Heart right ventricle (tissue), 16 donors: ENCODE measurements at regions of chr3 and their contacts with region 1.

Region 1: DNA sequence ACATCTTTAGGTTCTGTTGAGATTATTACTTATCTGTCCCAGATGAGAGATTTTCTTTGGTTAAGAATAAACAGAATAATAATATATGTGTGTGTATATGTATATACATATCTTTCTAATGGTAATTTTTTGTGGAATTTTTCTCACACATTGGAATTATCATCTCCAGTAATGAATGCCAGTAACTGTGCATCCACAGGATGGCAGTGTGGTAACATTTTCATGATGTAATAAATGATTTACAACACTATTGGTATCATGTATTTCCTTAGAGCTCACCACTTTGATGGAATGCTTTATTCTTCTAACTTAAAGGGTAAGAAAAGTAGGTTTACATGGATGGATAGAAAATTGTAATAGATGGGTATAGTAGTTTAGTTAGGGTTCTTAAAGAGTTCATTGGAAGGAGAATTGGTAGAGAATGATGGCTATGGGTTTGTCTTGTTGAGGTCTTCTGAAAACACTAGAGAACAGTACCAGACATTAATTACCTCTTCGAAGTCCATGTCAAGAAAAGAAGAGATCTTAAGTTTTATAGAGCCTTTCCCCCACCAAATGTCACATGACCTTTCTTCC is 78.1 kb downstream of the STT3B start:
- DNase-seq: peak in 1 of 2 donors; percentile 26
- ATAC-seq: peak in 1 of 8 donors; percentile 24
- H3K4me3 ChIP-seq: no peak overlapping the region
- H3K27ac ChIP-seq: no peak overlapping the region
- H3K4me1 ChIP-seq: peaks cover 0 to 3% (median 0%) of the 10 kb centered on the region in 9 donors
- H3K27me3 ChIP-seq: no peaks in the 10 kb centered on the region
- CTCF ChIP-seq: peak; percentile 23 to 72 (median 59)

Region 2: DNA sequence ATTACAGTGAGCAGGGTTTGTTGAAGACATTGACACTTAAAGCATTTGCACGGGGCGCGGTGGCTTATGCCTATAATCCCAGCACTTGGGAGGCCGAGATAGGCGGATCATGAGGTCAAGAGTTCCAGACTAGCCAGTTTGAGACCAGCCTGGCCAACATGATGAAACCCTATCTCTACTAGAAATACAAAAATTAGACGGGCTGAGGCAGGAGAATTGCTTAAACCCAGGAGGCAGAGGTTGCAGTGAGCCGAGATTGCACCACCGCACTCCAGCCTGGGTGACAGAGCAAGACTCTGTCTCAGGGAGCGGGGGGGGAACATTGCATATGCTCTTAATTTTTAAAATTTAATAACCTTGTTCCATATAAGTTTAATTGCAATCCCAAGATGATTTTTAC is 66.2 kb before region 1 on chr3:
- intact Hi-C with region 1: loop called in 1 of 10 experiments (anchors 5 kb)
- DNase-seq: peak in 1 of 2 donors; percentile 22
- ATAC-seq: peak in 6 of 8 donors; percentile 25 to 73 (median 52)
- H3K4me3 ChIP-seq: peak overlapping the region in 1 of 10 donors; percentile 1
- H3K27ac ChIP-seq: peak overlapping the region in 3 of 10 donors; percentile 4 to 10 (median 7)
- H3K4me1 ChIP-seq: peaks cover 3 to 89% (median 37%) of the 10 kb centered on the region in 9 donors
- H3K27me3 ChIP-seq: no peaks in the 10 kb centered on the region
- CTCF ChIP-seq: no peak

Region 3: DNA sequence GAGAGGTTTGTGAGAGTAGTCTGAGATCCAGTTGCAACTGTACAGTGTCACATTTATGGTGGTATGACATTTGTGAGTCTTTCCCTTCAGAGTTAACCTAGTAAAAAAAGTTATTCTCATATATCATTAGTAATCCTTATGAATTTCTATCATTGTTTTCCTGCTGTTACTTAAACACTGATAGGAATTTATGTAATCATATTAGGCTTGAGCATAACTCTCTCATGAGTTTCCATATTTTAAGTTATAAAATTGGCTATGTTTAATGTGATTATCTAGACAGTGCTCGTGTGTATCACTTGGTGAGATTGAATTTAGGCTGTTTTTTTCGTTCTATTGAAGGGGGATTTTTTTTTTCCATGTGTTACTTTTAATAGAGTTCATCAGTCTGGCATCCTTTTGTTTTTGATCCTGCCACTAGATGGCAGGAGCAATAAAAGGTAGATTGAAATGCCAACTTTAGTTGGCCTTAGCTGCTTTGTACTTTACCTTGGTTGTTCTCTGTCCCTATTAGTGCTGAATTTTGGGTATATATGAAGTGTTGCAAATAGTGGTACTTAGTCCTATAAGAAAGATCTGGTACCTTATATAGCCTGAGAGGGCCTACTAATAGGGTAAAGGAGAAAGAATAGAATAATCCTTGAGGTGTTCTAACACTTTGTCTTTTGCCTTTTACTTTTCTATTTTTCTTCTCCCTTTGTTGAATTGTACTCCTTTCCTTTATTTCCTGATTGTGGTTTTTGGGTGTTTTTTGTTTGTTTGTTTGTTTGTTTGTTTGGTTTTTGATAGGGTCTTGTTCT is 60.1 kb before region 1 on chr3:
- intact Hi-C with region 1: loop called in 2 of 10 experiments (anchors 5 to 10 kb)
- DNase-seq: no peak
- ATAC-seq: peak in 5 of 8 donors; percentile 43 to 71 (median 59)
- H3K4me3 ChIP-seq: no peak overlapping the region
- H3K27ac ChIP-seq: no peak overlapping the region
- H3K4me1 ChIP-seq: peaks cover 10 to 66% (median 53%) of the 10 kb centered on the region in 9 donors
- H3K27me3 ChIP-seq: no peaks in the 10 kb centered on the region
- CTCF ChIP-seq: peak; percentile 30 to 78 (median 68)

Region 4: DNA sequence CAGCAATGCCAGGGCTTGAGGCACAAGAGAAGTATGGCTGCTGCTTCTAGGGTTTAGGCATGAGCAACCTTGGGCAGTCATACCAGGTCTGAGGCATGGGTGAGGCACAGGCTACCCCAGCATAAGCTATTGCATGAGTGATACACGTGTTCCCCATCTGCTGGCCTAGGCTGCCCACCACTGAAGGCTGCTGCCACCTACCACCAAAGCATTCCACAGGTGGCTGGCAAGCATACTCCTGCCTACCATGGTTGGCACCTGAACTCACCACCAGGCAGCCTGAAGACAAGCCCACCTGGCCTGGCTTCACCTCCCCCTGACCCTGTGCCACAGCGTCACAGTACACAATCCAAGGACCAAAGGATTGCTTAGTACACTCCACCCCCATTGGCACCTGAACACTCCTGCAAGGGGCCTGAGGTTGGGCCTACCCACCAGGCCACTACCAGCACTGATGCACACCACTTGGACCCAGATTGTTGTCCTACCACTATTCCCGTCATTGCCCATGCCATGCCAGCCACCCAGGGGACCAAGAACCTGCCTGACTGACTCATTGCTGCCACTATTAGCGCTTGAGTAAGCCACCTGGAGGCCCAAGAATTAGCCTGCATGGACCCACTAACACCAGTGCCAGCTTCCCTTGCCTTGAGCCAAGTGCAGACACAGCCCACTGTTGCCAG is 37.6 kb after region 1 on chr3:
- intact Hi-C with region 1: no loop called
- DNase-seq: no peak
- ATAC-seq: peak in 3 of 8 donors; percentile 4 to 47 (median 33)
- H3K4me3 ChIP-seq: no peak overlapping the region
- H3K27ac ChIP-seq: no peak overlapping the region
- H3K4me1 ChIP-seq: no peaks in the 10 kb centered on the region
- H3K27me3 ChIP-seq: no peaks in the 10 kb centered on the region
- CTCF ChIP-seq: no peak

Region 5: GRCh38 chr3:31671976-31672375 is 61.2 kb after region 1 on chr3:
- intact Hi-C with region 1: no loop called
- DNase-seq: no peak
- ATAC-seq: no peak
- H3K4me3 ChIP-seq: no peak overlapping the region
- H3K27ac ChIP-seq: no peak overlapping the region
- H3K4me1 ChIP-seq: peaks cover 0 to 21% (median 0%) of the 10 kb centered on the region in 9 donors
- H3K27me3 ChIP-seq: no peaks in the 10 kb centered on the region
- CTCF ChIP-seq: no peak

Region 6: DNA sequence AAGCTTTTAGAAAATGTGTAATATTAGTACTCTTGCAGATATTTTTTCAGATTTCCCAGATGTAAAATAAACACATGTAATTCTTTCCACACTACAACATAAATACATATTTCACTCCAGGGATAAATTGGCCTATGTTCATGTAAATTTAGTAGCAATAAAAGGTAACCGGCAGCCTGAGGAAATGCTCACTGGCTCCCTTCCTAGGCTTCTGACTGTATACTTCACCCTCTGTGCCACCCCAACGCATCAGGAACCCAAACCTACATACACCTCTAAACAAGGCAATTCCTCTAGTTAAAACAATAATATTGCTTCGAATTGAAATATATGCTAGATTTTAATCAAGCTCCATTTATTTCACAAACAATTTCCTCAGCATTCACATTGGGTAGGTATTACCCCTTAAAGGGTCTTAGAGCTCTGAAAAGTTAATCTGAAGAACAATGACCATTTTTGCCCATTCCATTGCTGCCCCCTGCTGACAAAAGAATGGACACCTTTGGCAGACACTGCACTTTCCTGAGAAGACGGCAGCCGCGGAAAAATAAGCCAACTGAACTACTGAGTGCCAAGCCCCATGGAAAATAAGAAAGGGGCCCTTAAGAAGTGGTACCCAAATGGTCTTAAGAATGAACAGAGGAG is 157.8 kb after region 1 on chr3:
- intact Hi-C with region 1: loop called in 8 of 10 experiments (anchors 5 to 10 kb)
- DNase-seq: peak in 1 of 2 donors; percentile 70
- ATAC-seq: peak in 7 of 8 donors; percentile 57 to 76 (median 68)
- H3K4me3 ChIP-seq: no peak overlapping the region
- H3K27ac ChIP-seq: no peak overlapping the region
- H3K4me1 ChIP-seq: peaks cover 0 to 6% (median 0%) of the 10 kb centered on the region in 9 donors
- H3K27me3 ChIP-seq: no peaks in the 10 kb centered on the region
- CTCF ChIP-seq: peak; percentile 50 to 81 (median 77)

Region 7: DNA sequence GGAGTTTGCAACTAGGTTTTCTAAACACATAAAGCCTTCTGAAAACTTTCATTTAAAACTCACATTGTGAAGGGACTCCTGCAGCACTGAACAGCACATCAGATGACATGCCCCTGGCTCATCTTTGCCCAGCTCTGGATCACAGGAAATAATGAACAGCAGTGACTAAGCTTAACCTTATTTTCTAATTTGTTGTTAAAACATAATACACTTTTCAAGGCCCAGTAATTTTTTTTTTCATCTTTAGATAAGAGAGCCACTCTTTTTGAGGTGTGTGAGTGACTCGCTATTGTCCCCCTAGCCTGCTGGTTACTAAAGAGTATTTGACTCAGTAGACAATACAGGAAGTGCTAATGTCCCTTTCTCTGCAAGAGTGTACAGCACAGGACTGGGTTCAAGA is 166.3 kb after region 1 on chr3:
- intact Hi-C with region 1: loop called in 1 of 10 experiments (anchors 10 kb)
- DNase-seq: no peak
- ATAC-seq: no peak
- H3K4me3 ChIP-seq: no peak overlapping the region
- H3K27ac ChIP-seq: no peak overlapping the region
- H3K4me1 ChIP-seq: no peaks in the 10 kb centered on the region
- H3K27me3 ChIP-seq: no peaks in the 10 kb centered on the region
- CTCF ChIP-seq: no peak

Region 8: DNA sequence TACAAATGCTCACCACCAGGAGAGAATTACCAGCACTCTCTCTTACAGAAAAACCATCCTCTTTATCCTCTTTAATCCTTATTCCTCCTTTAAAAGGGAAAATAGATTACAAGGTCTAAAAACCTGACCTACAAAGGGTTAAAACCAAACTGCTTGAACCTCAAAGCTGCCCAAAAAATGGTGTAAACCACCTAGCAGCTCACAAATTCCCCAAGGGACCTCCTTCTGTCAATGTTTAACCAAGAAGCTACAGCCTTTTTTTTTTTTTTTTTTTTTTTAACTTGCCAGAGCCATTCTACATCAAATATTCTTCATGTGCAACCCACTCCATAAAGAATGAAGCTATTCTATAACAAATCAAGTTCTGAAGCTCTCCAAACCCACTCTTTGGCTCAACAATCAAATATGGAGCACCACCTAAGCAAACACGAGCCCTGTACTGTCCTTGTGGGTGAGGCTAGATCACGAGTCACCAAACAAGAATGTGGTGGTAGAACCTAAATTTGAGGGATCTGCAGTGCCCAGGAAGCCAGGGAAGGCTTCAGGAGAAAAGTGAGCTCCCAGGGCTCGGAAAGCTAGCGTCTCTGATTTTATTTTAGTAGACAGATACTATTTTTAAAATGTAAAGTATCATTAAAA is 350.1 kb after region 1 on chr3:
- intact Hi-C with region 1: no loop called
- DNase-seq: no peak
- ATAC-seq: no peak
- H3K4me3 ChIP-seq: no peak overlapping the region
- H3K27ac ChIP-seq: peak overlapping the region in 6 of 10 donors; percentile 21 to 77 (median 72)
- H3K4me1 ChIP-seq: peaks cover 3 to 45% (median 32%) of the 10 kb centered on the region in 9 donors
- H3K27me3 ChIP-seq: no peaks in the 10 kb centered on the region
- CTCF ChIP-seq: no peak

Region 9: GRCh38 chr3:32143849-32144757 is 533.3 kb after region 1 on chr3:
- intact Hi-C with region 1: loop called in 3 of 10 experiments (anchors 10 kb)
- DNase-seq: peak in 1 of 2 donors; percentile 71
- ATAC-seq: peak; percentile 61 to 87 (median 80)
- H3K4me3 ChIP-seq: no peak overlapping the region
- H3K27ac ChIP-seq: no peak overlapping the region
- H3K4me1 ChIP-seq: peaks cover 0 to 43% (median 11%) of the 10 kb centered on the region in 9 donors
- H3K27me3 ChIP-seq: no peaks in the 10 kb centered on the region
- CTCF ChIP-seq: peak; percentile 55 to 90 (median 85)